Caco-2 (cell line): ENCODE measurements at regions of chr13 and their contacts with region 1.

Region 1: GRCh38 chr13:92530364-92530763 is 696.2 kb upstream of the GPC6 start:
- DNase-seq: peak in 1 of 2 experiments; percentile 9
- H3K4me3 ChIP-seq: no peak overlapping the region
- H3K4me3 Mint-ChIP-seq: no peak overlapping the region
- H3K27ac Mint-ChIP-seq: no peak overlapping the region
- H3K4me1 ChIP-seq: no peaks in the 10 kb centered on the region
- H3K4me1 Mint-ChIP-seq: no peaks in the 10 kb centered on the region
- H3K27me3 ChIP-seq: no peaks in the 10 kb centered on the region
- H3K27me3 Mint-ChIP-seq: no peaks in the 10 kb centered on the region
- CTCF ChIP-seq: peak in 1 of 2 experiments; percentile 31

Region 2: DNA sequence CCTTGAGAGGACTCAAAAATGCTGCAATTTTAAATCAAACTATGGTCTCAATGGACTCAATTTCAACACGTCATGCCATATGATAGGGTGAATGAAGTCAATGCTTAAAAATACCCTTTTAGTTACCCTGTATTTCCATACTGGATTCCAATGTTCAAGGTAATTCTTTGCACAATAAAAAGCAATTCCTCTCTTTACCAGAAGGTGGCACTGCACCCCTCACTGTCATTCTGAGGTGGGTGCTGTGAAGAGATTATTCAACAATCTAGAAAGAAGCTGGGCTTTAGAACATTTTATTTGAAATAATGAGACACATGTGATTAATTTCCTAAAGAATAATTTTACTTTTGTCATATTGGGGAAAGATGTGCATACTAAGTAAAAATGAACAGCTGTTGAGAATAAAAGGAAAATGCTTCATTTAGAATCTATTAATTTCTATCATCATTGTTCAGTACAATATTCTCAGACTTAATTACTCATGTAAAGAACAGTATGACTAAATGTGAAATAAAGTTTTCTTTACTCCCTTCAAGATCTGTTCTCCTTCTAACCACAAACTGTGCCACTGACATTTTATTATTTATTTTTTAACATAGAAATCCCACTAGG is 342.9 kb before region 1 on chr13:
- CTCF ChIA-PET with region 1: interaction called, 3 read pairs
- POLR2A ChIA-PET with region 1: no interaction called
- intact Hi-C with region 1: loop called (anchors 1 kb)
- DNase-seq: peak in 1 of 2 experiments; percentile 63
- H3K4me3 ChIP-seq: no peak overlapping the region
- H3K4me3 Mint-ChIP-seq: no peak overlapping the region
- H3K27ac Mint-ChIP-seq: no peak overlapping the region
- H3K4me1 ChIP-seq: no peaks in the 10 kb centered on the region
- H3K4me1 Mint-ChIP-seq: no peaks in the 10 kb centered on the region
- H3K27me3 ChIP-seq: no peaks in the 10 kb centered on the region
- H3K27me3 Mint-ChIP-seq: no peaks in the 10 kb centered on the region
- CTCF ChIP-seq: peak; percentile 80 to 82

Region 3: GRCh38 chr13:92355213-92355612 is 175.2 kb before region 1 on chr13:
- CTCF ChIA-PET with region 1: no interaction called
- POLR2A ChIA-PET with region 1: no interaction called
- intact Hi-C with region 1: loop called (anchors 10 kb)
- DNase-seq: peak; percentile 41 to 45
- H3K4me3 ChIP-seq: no peak overlapping the region
- H3K4me3 Mint-ChIP-seq: no peak overlapping the region
- H3K27ac Mint-ChIP-seq: no peak overlapping the region
- H3K4me1 ChIP-seq: 0 out of 2 replicates have a peak, but pooled peaks cover 7% of the 10 kb centered on the region
- H3K4me1 Mint-ChIP-seq: no peaks in the 10 kb centered on the region
- H3K27me3 ChIP-seq: no peaks in the 10 kb centered on the region
- H3K27me3 Mint-ChIP-seq: no peaks in the 10 kb centered on the region
- CTCF ChIP-seq: peak; percentile 47 to 51

Region 4: GRCh38 chr13:92407858-92408257 is 122.5 kb before region 1 on chr13:
- CTCF ChIA-PET with region 1: no interaction called
- POLR2A ChIA-PET with region 1: no interaction called
- intact Hi-C with region 1: no loop called
- DNase-seq: no peak
- H3K4me3 ChIP-seq: no peak overlapping the region
- H3K4me3 Mint-ChIP-seq: no peak overlapping the region
- H3K27ac Mint-ChIP-seq: no peak overlapping the region
- H3K4me1 ChIP-seq: no peaks in the 10 kb centered on the region; the same call in 1 of the 2 replicates
- H3K4me1 Mint-ChIP-seq: peaks cover 3% of the 10 kb centered on the region
- H3K27me3 ChIP-seq: no peaks in the 10 kb centered on the region
- H3K27me3 Mint-ChIP-seq: no peaks in the 10 kb centered on the region
- CTCF ChIP-seq: no peak

Region 5: GRCh38 chr13:92500192-92500591 is 30.2 kb before region 1 on chr13:
- CTCF ChIA-PET with region 1: no interaction called
- POLR2A ChIA-PET with region 1: no interaction called
- intact Hi-C with region 1: loop called (anchors 2 kb)
- DNase-seq: peak; percentile 51 to 74
- H3K4me3 ChIP-seq: no peak overlapping the region
- H3K4me3 Mint-ChIP-seq: peak overlapping the region; percentile 4
- H3K27ac Mint-ChIP-seq: peak overlapping the region; percentile 69
- H3K4me1 ChIP-seq: peaks cover 18% of the 10 kb centered on the region
- H3K4me1 Mint-ChIP-seq: peaks cover 41% of the 10 kb centered on the region
- H3K27me3 ChIP-seq: no peaks in the 10 kb centered on the region
- H3K27me3 Mint-ChIP-seq: no peaks in the 10 kb centered on the region
- CTCF ChIP-seq: no peak

Region 6: GRCh38 chr13:93190006-93190405 is 659.6 kb after region 1 on chr13:
- CTCF ChIA-PET with region 1: no interaction called
- POLR2A ChIA-PET with region 1: no interaction called
- intact Hi-C with region 1: no loop called
- DNase-seq: no peak
- H3K4me3 ChIP-seq: no peak overlapping the region
- H3K4me3 Mint-ChIP-seq: no peak overlapping the region
- H3K27ac Mint-ChIP-seq: no peak overlapping the region
- H3K4me1 ChIP-seq: no peaks in the 10 kb centered on the region
- H3K4me1 Mint-ChIP-seq: no peaks in the 10 kb centered on the region
- H3K27me3 ChIP-seq: no peaks in the 10 kb centered on the region
- H3K27me3 Mint-ChIP-seq: no peaks in the 10 kb centered on the region
- CTCF ChIP-seq: no peak